Heart right ventricle (tissue), 16 donors: ENCODE measurements at regions of chr7 and their contacts with region 1.

Region 1: DNA sequence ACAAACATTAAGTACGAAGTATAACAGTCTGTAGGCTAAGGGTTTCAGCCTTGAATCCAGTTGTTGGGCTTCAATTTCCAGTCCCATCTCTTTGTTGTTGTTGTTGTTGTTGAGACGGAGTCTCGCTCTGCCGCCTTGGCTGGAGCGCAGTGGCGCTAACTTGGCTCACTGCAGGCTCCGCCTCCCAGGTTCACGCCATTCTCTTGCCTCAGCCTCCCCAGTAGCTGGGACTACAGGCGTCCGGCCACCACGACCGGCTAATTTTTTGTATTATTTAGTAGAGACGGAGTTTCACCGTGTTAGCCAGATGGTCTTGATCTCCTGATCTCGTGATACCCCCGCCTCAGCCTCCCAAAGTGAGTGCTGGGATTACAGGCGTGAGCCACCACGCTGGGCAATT is 464.9 kb downstream of the ANKRD7 start:
- DNase-seq: no peak
- ATAC-seq: no peak
- H3K4me3 ChIP-seq: no peak overlapping the region
- H3K27ac ChIP-seq: no peak overlapping the region
- H3K4me1 ChIP-seq: no peaks in the 10 kb centered on the region
- H3K27me3 ChIP-seq: no peaks in the 10 kb centered on the region
- CTCF ChIP-seq: no peak

Region 2: GRCh38 chr7:118609207-118609606 is 80.2 kb before region 1 on chr7:
- intact Hi-C with region 1: no loop called
- DNase-seq: no peak
- ATAC-seq: no peak
- H3K4me3 ChIP-seq: no peak overlapping the region
- H3K27ac ChIP-seq: no peak overlapping the region
- H3K4me1 ChIP-seq: no peaks in the 10 kb centered on the region
- H3K27me3 ChIP-seq: no peaks in the 10 kb centered on the region
- CTCF ChIP-seq: no peak

Region 3: GRCh38 chr7:118642396-118642795 is 47.0 kb before region 1 on chr7:
- intact Hi-C with region 1: loop called in 1 of 10 experiments (anchors 2 kb)
- DNase-seq: no peak
- ATAC-seq: no peak
- H3K4me3 ChIP-seq: no peak overlapping the region
- H3K27ac ChIP-seq: no peak overlapping the region
- H3K4me1 ChIP-seq: no peaks in the 10 kb centered on the region
- H3K27me3 ChIP-seq: no peaks in the 10 kb centered on the region
- CTCF ChIP-seq: no peak